Activated T-helper 1 cell treated with anti-CD3 and anti-CD28 coated beads, Interleukin-12 subunit alpha, Interleukin-12 subunit beta, Interleukin-2, Interleukin-4 antibody, amounts not matched to agents 30 ng/mL and 10 ng/mL and 1 ng/mL, durations not matched to agents 14 hours and 24 hours and 36 hours (primary cell): ENCODE measurements at regions of chr2 and their contacts with region 1.

Region 1: GRCh38 chr2:10302479-10303180 is at the start of gene HPCAL1:
- DNase-seq: peak; percentile 80
- H3K4me3 Mint-ChIP-seq: peak within 1 kb of the TSS; percentile 99
- H3K27ac Mint-ChIP-seq: peak within 1 kb of the TSS; percentile 90
- H3K4me1 Mint-ChIP-seq: peaks cover 73% of the 10 kb centered on the region
- H3K27me3 Mint-ChIP-seq: peaks cover 4% of the 10 kb centered on the region
- total RNA-seq, gene HPCAL1: 59.6 and 62.4 TPM in 2 replicates

Region 2: GRCh38 chr2:9975805-9976447 is 326.7 kb before region 1 on chr2:
- intact Hi-C with region 1: loop called (anchors 10 kb)
- DNase-seq: no peak
- H3K4me3 Mint-ChIP-seq: no peak overlapping the region
- H3K27ac Mint-ChIP-seq: peak overlapping the region; percentile 4
- H3K4me1 Mint-ChIP-seq: peaks cover 72% of the 10 kb centered on the region
- H3K27me3 Mint-ChIP-seq: peaks cover 4% of the 10 kb centered on the region

Region 3: DNA sequence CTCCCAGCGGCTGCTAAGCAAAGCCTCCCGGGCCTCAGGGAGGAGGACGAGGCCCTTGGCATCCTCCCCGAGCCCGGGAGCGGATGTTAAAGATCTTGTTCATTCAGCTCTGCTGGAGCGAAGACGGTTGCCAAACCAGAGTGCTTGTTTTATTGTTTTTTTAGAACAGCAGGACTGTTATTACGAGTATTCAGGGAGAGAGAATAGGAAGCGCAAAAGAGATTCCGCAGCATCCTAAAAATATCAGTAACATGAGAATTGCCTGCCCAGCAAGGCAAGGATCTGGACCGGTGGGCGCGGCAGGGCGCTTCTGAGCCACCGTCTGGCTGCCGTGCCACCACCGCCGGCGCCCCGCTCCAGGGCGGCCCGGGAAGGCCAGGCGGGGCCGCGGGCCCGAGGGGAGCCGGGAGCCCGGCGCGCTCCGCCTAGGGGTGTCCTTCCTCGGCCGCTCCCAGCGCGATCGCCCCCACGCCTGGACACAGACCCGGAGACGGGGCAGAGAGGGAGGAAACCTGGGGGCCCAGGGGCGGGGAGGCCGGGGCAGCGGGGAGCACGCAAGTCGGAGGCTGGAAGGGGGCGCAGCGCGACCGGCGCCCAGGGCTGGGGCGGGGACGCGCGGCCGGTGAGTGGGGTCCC is 223.3 kb before region 1 on chr2:
- intact Hi-C with region 1: loop called (anchors 5 kb)
- DNase-seq: no peak
- H3K4me3 Mint-ChIP-seq: peak overlapping the region; percentile 81
- H3K27ac Mint-ChIP-seq: peak overlapping the region; percentile 66
- H3K4me1 Mint-ChIP-seq: peaks cover 47% of the 10 kb centered on the region
- H3K27me3 Mint-ChIP-seq: peaks cover 66% of the 10 kb centered on the region

Region 4: GRCh38 chr2:10382354-10383061 is 79.9 kb after region 1 on chr2:
- intact Hi-C with region 1: loop called (anchors 2 kb)
- DNase-seq: peak; percentile 10
- H3K4me3 Mint-ChIP-seq: peak overlapping the region; percentile 7
- H3K27ac Mint-ChIP-seq: no peak overlapping the region
- H3K4me1 Mint-ChIP-seq: peaks cover 69% of the 10 kb centered on the region
- H3K27me3 Mint-ChIP-seq: no peaks in the 10 kb centered on the region

Region 5: DNA sequence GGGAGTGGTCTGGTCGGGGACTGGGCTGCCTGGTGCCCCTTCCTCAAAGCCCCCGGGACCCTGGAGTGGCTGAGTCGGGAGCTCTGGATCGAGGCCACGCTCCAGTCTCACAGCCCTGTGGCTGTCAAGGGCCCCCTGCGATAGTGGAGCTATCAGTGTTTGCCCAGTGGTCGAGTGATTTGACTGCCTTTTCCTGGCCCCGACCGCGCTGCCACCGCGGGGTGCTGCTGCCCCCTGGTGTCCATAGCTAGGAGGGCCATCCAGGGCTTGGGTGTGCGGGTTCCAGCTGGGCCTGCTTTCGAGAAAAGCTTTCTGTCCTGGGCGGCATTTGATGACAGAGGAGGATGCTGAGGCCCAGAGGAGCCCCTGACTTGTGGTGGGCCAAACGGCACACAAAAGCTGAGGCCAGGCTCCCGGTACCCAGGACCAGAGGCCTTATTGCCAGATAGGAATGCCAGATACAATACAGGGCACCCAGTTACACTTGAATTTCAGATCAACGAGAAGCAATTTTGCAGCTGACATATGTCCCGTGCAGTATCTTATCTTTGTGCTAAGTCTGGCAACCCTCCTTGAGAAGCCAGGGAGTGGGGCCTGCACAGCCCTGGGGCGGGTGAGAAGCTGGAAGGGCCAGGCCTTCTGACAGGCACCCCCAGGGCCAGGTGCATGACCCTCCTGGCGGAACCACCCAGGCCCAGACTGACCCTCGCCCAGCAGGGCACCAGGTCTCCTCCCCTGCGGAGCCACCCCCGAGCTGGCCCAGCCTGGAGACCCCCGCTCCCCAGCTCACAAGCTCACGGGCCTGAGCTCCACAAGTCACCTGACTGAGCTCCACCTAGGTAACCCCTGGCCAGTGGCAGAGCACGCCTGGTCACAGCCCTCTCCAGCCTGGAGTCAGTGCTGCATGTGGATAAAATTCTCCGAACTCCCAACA is 132.5 kb after region 1 on chr2:
- intact Hi-C with region 1: loop called (anchors 1 kb)
- DNase-seq: peak; percentile 65
- H3K4me3 Mint-ChIP-seq: no peak overlapping the region
- H3K27ac Mint-ChIP-seq: peak overlapping the region; percentile 35
- H3K4me1 Mint-ChIP-seq: peaks cover 6% of the 10 kb centered on the region
- H3K27me3 Mint-ChIP-seq: peaks cover 2% of the 10 kb centered on the region

Region 6: DNA sequence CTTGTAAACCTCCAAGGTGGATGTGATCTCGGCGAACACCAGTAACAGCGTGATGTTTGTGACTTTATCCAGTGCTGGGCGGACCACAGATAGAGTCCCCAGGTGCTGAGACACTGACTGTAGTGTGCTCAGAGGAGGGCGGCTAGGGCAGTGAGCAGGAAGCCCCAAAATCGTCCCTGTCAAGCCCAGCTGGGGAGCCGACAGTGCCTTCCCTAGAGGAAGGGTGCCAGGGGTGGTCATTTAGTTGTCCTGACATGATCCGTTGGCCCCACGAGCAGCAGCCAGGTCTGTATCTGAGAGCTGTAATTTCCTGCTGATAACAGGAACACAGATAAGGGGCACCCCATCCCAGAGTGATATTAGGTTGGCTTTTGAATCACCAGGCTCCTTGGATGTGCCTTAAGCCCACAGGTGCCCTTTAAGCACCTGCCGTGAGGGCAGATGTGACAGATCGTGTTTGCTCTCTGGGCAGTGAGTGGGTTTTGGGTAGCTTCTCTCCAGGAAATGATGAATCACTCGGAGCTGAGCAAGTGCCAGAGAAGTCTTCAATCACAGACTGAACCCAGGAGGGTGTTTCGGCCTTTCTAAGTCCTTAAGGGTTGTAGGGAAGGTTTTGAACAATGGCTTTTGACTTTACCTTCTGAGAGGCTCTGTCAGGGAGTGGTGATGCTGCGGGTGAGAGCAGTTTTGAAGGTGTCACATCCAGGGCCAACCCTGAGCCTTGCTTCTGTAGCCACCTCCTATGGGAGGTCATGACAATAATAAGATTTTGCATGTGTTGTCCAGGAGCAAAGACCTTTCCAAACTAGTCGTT is 1451.5 kb after region 1 on chr2:
- intact Hi-C with region 1: loop called (anchors 10 kb)
- DNase-seq: peak; percentile 57
- H3K4me3 Mint-ChIP-seq: peak overlapping the region; percentile 69
- H3K27ac Mint-ChIP-seq: peak overlapping the region; percentile 82
- H3K4me1 Mint-ChIP-seq: peaks cover 85% of the 10 kb centered on the region
- H3K27me3 Mint-ChIP-seq: no peaks in the 10 kb centered on the region